ENCODE measurements at regions of chr19 and their contacts with region 1.

Region 1: GRCh38 chr19:38402967-38403861 is at the start of gene FAM98C:
- DNase-seq: peak; percentile 76
- ATAC-seq: peak; percentile 99
- H3K4me3 ChIP-seq: peak within 1 kb of the TSS; percentile 86
- H3K27ac ChIP-seq: peak within 1 kb of the TSS; percentile 72
- H3K4me1 ChIP-seq: no peaks in the 10 kb centered on the region
- H3K27me3 ChIP-seq: no peaks in the 10 kb centered on the region
- CTCF ChIP-seq: peak; percentile 88 to 94 (median 90)
- EP300 ChIP-seq: no peak
- POLR2A ChIP-seq: peak; percentile 85
- RAD21 ChIP-seq: peak; percentile 90
- polyA plus RNA-seq, gene FAM98C: 1.4 to 2.3 TPM

Region 2: DNA sequence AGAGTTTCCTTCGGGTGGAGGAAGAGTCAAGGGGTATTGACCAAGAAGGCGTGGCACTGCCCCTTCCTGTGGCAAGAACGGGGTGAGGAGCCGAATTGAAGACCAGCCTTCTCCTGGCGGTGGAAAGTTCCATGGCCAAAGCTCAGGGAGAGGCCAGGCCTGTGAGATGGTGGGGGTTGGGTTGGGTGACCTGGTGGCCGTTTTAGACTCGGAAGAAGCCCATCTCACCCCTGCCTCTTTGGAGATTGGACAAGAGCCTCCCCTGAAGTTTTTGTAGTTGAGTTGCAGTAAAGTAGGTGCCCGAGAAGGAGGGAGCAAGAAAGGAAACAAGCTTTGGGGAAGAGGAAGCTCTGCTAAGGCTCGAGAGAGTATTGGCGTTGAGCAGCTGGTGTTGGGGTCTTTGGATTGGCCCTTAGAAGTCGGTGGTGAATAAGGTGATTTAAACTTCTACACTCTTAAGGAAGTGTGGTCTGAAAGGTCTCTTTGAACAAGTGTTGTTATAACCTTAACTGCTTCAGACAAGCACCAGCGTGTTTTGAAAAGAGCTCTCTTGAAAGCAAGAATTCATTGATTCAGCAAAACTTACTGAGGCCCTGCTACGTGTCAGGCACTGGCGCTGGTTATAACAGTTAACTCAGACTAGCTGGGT is 137.9 kb before region 1 on chr19:
- CTCF ChIA-PET with region 1: no interaction called
- POLR2A ChIA-PET with region 1: no interaction called
- RAD21 ChIA-PET with region 1: no interaction called
- SMC1A ChIA-PET with region 1: no interaction called
- in situ Hi-C with region 1: no loop called
- intact Hi-C with region 1: no loop called
- DNase-seq: no peak
- ATAC-seq: no peak
- H3K4me3 ChIP-seq: no peak overlapping the region
- H3K27ac ChIP-seq: no peak overlapping the region
- H3K4me1 ChIP-seq: peaks cover 9% of the 10 kb centered on the region
- H3K27me3 ChIP-seq: peaks cover 0 to 2% of the 10 kb centered on the region in 2 experiments; a peak in 2 of 4 replicates
- CTCF ChIP-seq: no peak
- EP300 ChIP-seq: no peak
- POLR2A ChIP-seq: no peak
- RAD21 ChIP-seq: no peak

Region 3: DNA sequence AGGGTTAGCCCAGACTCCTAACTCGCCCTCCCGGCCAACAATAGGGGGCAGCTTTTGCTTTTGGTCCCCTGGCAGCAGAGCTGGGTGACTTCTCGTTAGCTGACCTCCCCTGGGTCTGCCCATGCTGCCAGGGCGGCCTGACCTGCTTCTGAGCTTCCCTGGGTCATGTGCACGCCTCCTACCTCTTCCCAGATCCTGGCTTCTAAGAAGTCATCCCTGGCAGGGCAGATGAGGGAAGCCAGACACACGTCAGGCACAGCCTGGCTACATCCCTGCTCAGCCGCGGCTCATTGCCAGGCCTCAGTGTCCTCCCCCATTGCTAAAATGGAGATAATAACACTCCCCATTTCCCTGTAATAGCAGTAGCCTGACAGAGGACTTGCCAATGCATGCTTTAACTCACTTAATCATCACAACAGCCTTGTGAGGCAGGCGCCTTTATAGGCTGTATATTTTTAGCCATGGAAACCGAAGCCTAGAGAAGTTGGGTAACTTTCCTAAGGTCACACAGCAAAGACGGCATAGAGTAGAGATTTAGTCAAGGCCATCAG is 81.5 kb before region 1 on chr19:
- CTCF ChIA-PET with region 1: no interaction called
- POLR2A ChIA-PET with region 1: no interaction called
- RAD21 ChIA-PET with region 1: no interaction called
- SMC1A ChIA-PET with region 1: no interaction called
- in situ Hi-C with region 1: no loop called
- intact Hi-C with region 1: no loop called
- DNase-seq: no peak
- ATAC-seq: no peak
- H3K4me3 ChIP-seq: no peak overlapping the region
- H3K27ac ChIP-seq: no peak overlapping the region
- H3K4me1 ChIP-seq: no peaks in the 10 kb centered on the region
- H3K27me3 ChIP-seq: no peaks in the 10 kb centered on the region; a peak in 2 of 4 replicates
- CTCF ChIP-seq: no peak
- EP300 ChIP-seq: no peak
- POLR2A ChIP-seq: no peak
- RAD21 ChIP-seq: no peak

Region 4: DNA sequence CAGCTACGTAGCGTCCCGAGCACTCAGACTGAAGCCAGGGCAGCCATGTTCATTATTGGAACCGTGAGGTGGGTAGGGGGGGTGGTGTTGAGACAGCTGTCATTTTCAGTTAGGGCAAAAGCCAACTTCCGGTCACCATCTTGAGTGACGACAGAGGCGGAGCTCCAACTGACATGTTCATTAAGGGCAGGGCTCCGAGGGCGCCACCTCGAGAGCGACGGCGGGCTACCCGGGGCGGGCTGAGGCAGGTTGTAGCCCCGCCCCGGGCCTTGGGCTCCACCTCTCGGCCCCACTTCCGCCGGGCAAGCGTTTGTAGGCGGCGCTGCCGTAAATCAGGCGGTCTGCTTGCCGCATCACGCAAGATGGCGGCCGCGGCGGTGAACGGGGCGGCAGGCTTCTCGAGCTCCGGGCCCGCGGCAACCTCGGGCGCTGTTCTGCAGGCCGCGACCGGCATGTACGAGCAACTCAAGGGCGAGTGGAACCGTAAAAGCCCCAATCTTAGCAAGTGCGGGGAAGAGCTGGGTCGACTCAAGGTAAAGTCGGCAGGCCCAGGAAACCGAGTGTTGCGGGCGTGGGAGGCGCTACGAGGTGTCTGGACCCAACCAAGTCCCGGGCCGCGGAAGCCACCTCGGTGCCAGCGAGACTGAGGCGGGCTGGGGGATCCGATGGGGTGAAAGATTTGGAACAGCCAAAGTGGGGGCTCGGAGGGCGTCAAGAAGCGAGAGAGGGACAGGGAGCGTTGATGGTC is 28.6 kb before region 1 on chr19 and contains the start of gene PSMD8:
- CTCF ChIA-PET with region 1: interaction called, 25 read pairs
- POLR2A ChIA-PET with region 1: interaction called, 13 read pairs
- RAD21 ChIA-PET with region 1: interaction called, 46 read pairs
- SMC1A ChIA-PET with region 1: interaction called, 7 read pairs
- in situ Hi-C with region 1: no loop called
- intact Hi-C with region 1: no loop called
- DNase-seq: peak; percentile 99
- ATAC-seq: peak; percentile 99
- H3K4me3 ChIP-seq: peak within 1 kb of the TSS; percentile 81
- H3K27ac ChIP-seq: peak within 1 kb of the TSS; percentile 88
- H3K4me1 ChIP-seq: peaks cover 14% of the 10 kb centered on the region
- H3K27me3 ChIP-seq: peaks cover 0 to 2% of the 10 kb centered on the region in 2 experiments; a peak in 1 of 4 replicates
- CTCF ChIP-seq: peak in 2 of 3 experiments; percentile 19 to 42; a peak in 3 of 6 replicates
- EP300 ChIP-seq: no peak
- POLR2A ChIP-seq: peak; percentile 100
- RAD21 ChIP-seq: no peak
- polyA plus RNA-seq, gene PSMD8: 81.2 to 99.0 TPM

Region 5: DNA sequence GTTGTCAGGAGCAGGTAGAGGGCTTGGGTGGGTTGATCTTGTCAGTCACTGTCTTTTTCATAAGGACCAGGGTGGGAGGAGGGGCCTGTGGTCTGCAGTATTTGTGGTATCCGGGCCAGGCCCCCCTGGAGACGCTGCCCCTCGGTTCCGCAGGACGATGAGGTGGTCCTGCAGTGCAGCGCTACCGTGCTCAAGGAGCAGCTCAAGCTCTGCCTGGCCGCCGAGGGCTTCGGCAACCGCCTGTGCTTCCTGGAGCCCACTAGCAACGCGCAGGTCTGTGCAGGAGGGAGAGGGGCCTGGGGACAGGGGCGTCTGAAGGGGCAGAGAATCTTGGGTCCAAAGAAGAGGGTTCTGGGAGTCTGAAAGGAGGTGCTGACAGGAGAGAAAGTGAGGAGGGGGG is 37.4 kb after region 1 on chr19:
- CTCF ChIA-PET with region 1: interaction called, 9 read pairs
- POLR2A ChIA-PET with region 1: no interaction called
- RAD21 ChIA-PET with region 1: interaction called, 10 read pairs
- SMC1A ChIA-PET with region 1: interaction called, 4 read pairs
- in situ Hi-C with region 1: no loop called
- intact Hi-C with region 1: no loop called
- DNase-seq: no peak
- ATAC-seq: no peak
- H3K4me3 ChIP-seq: no peak overlapping the region
- H3K27ac ChIP-seq: no peak overlapping the region
- H3K4me1 ChIP-seq: no peaks in the 10 kb centered on the region
- H3K27me3 ChIP-seq: no peaks in the 10 kb centered on the region
- CTCF ChIP-seq: no peak
- EP300 ChIP-seq: no peak
- POLR2A ChIP-seq: no peak
- RAD21 ChIP-seq: no peak

Region 6: GRCh38 chr19:38544034-38544958 is 141.1 kb after region 1 on chr19:
- CTCF ChIA-PET with region 1: interaction called, 14 read pairs
- POLR2A ChIA-PET with region 1: no interaction called
- RAD21 ChIA-PET with region 1: interaction called, 16 read pairs
- SMC1A ChIA-PET with region 1: interaction called, 4 read pairs
- in situ Hi-C with region 1: no loop called
- intact Hi-C with region 1: no loop called
- DNase-seq: peak; percentile 64
- ATAC-seq: peak; percentile 93
- H3K4me3 ChIP-seq: peak overlapping the region; percentile 25; the same call in 1 of the 2 replicates
- H3K27ac ChIP-seq: no peak overlapping the region
- H3K4me1 ChIP-seq: peaks cover 9% of the 10 kb centered on the region; the same call in 1 of the 2 replicates
- H3K27me3 ChIP-seq: no peaks in the 10 kb centered on the region
- CTCF ChIP-seq: peak; percentile 52 to 81 (median 69); a peak in 5 of 6 replicates
- EP300 ChIP-seq: no peak
- POLR2A ChIP-seq: no peak
- RAD21 ChIP-seq: peak; percentile 91

Region 7: GRCh38 chr19:38647368-38647965 is 244.3 kb after region 1 on chr19 and contains the start of gene ACTN4:
- CTCF ChIA-PET with region 1: interaction called, 3 read pairs
- POLR2A ChIA-PET with region 1: interaction called, 3 read pairs
- RAD21 ChIA-PET with region 1: interaction called, 4 read pairs
- SMC1A ChIA-PET with region 1: no interaction called
- in situ Hi-C with region 1: loop called (anchors 25 kb)
- intact Hi-C with region 1: no loop called
- DNase-seq: peak; percentile 78
- ATAC-seq: peak; percentile 91
- H3K4me3 ChIP-seq: peak within 1 kb of the TSS; percentile 100
- H3K27ac ChIP-seq: peak within 1 kb of the TSS; percentile 79
- H3K4me1 ChIP-seq: peaks cover 13% of the 10 kb centered on the region
- H3K27me3 ChIP-seq: no peaks in the 10 kb centered on the region
- CTCF ChIP-seq: no peak
- EP300 ChIP-seq: no peak
- POLR2A ChIP-seq: peak; percentile 99
- RAD21 ChIP-seq: no peak
- polyA plus RNA-seq, gene ACTN4: 2.4 to 6.7 TPM

Region 8: GRCh38 chr19:38929929-38930775 is 526.9 kb after region 1 on chr19 and contains the start of gene SARS2:
- CTCF ChIA-PET with region 1: interaction called, 30 read pairs
- POLR2A ChIA-PET with region 1: no interaction called
- RAD21 ChIA-PET with region 1: interaction called, 45 read pairs
- SMC1A ChIA-PET with region 1: interaction called, 18 read pairs
- in situ Hi-C with region 1: no loop called
- intact Hi-C with region 1: loop called (anchors 5 kb)
- DNase-seq: peak; percentile 79
- ATAC-seq: peak; percentile 72
- H3K4me3 ChIP-seq: peak within 1 kb of the TSS; percentile 98
- H3K27ac ChIP-seq: peak within 1 kb of the TSS; percentile 97
- H3K4me1 ChIP-seq: peaks cover 6% of the 10 kb centered on the region
- H3K27me3 ChIP-seq: no peaks in the 10 kb centered on the region
- CTCF ChIP-seq: peak; percentile 98 to 100 (median 99); a peak in 5 of 6 replicates
- EP300 ChIP-seq: peak in 1 of 2 experiments; percentile 27; a peak in 1 of 4 replicates
- POLR2A ChIP-seq: peak; percentile 86
- RAD21 ChIP-seq: peak; percentile 58
- polyA plus RNA-seq, gene SARS2: 2.6 to 7.8 TPM